Activated CD4-positive, alpha-beta memory T cell treated with anti-CD3 and anti-CD28 coated beads for 36 hours (primary cell): ENCODE measurements at regions of chr11 and their contacts with region 1.

Region 1: DNA sequence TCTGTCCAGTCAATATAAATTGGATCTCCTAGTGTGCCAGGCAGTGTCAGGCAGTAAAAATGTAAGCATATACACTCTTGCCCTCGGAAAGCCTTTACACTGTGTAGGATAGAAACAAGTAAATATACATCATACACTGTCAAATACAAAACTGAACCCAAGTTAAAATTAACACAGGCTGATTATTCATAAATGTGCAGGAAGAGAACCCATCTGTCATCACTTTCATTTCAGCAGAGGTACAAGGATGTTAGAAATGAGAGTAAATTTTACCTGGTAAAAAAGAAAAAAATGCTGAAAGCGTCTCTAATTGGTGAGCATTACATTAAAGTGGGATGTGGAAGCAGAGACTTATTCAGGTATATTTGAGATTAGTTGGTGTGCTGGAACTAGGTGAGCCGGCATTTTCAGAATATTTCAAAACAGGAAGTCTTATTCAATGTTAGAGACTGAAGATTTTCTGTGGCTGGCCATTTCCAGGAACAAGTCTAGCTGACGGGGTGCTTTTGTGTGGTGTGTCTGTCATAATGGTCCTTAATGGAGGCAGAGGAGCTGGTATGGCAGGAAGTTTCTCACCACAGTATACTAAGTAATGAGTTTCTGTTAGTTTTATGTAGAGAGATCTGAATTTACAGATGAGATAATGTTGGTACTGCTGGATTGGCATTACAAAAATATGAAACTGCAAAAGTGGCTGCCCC is 192.6 kb downstream of the CASP12 start:
- DNase-seq: peak; percentile 87
- H3K4me3 Mint-ChIP-seq: peak overlapping the region; percentile 64
- H3K27ac Mint-ChIP-seq: peak overlapping the region; percentile 89
- H3K4me1 Mint-ChIP-seq: peaks cover 48% of the 10 kb centered on the region
- H3K27me3 Mint-ChIP-seq: no peaks in the 10 kb centered on the region

Region 2: DNA sequence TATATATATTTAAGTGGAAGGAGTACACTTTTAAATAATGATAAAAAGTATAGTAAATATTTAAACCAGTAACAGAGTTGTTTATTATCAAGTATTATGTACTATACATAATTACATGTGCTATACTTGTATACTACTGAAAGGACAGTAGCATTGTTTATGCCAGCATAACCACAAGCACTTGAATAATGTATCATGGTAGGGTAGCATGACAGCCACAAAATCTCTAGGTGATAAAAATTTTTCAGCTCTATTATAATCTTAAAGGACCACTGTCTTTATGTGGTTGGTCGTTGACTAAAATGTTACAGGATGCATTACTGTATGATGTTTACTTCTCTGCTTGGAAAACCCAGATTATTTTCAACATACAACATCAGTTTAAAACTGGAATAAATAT is 156.6 kb before region 1 on chr11:
- CTCF ChIA-PET with region 1: no interaction called
- POLR2A ChIA-PET with region 1: no interaction called
- intact Hi-C with region 1: no loop called
- DNase-seq: no peak
- H3K4me3 Mint-ChIP-seq: no peak overlapping the region
- H3K27ac Mint-ChIP-seq: no peak overlapping the region
- H3K4me1 Mint-ChIP-seq: peaks cover 11% of the 10 kb centered on the region
- H3K27me3 Mint-ChIP-seq: no peaks in the 10 kb centered on the region

Region 3: GRCh38 chr11:104564921-104565582 is 140.6 kb before region 1 on chr11:
- CTCF ChIA-PET with region 1: no interaction called
- POLR2A ChIA-PET with region 1: no interaction called
- intact Hi-C with region 1: no loop called
- DNase-seq: no peak
- H3K4me3 Mint-ChIP-seq: no peak overlapping the region
- H3K27ac Mint-ChIP-seq: no peak overlapping the region
- H3K4me1 Mint-ChIP-seq: no peaks in the 10 kb centered on the region
- H3K27me3 Mint-ChIP-seq: no peaks in the 10 kb centered on the region

Region 4: GRCh38 chr11:104609311-104610085 is 96.1 kb before region 1 on chr11:
- CTCF ChIA-PET with region 1: interaction called, 5 read pairs
- POLR2A ChIA-PET with region 1: no interaction called
- intact Hi-C with region 1: loop called (anchors 2 kb)
- DNase-seq: peak; percentile 33
- H3K4me3 Mint-ChIP-seq: no peak overlapping the region
- H3K27ac Mint-ChIP-seq: no peak overlapping the region
- H3K4me1 Mint-ChIP-seq: peaks cover 23% of the 10 kb centered on the region
- H3K27me3 Mint-ChIP-seq: no peaks in the 10 kb centered on the region

Region 5: GRCh38 chr11:104668797-104669463 is 36.7 kb before region 1 on chr11:
- CTCF ChIA-PET with region 1: no interaction called
- POLR2A ChIA-PET with region 1: no interaction called
- intact Hi-C with region 1: loop called (anchors 1 kb)
- DNase-seq: no peak
- H3K4me3 Mint-ChIP-seq: no peak overlapping the region
- H3K27ac Mint-ChIP-seq: no peak overlapping the region
- H3K4me1 Mint-ChIP-seq: peaks cover 9% of the 10 kb centered on the region
- H3K27me3 Mint-ChIP-seq: no peaks in the 10 kb centered on the region

Region 6: GRCh38 chr11:104876861-104877431 is 171.3 kb after region 1 on chr11:
- CTCF ChIA-PET with region 1: no interaction called
- POLR2A ChIA-PET with region 1: no interaction called
- intact Hi-C with region 1: loop called (anchors 1 kb)
- DNase-seq: no peak
- H3K4me3 Mint-ChIP-seq: peak overlapping the region; percentile 3
- H3K27ac Mint-ChIP-seq: peak overlapping the region; percentile 23
- H3K4me1 Mint-ChIP-seq: peaks cover 31% of the 10 kb centered on the region
- H3K27me3 Mint-ChIP-seq: no peaks in the 10 kb centered on the region

Region 7: DNA sequence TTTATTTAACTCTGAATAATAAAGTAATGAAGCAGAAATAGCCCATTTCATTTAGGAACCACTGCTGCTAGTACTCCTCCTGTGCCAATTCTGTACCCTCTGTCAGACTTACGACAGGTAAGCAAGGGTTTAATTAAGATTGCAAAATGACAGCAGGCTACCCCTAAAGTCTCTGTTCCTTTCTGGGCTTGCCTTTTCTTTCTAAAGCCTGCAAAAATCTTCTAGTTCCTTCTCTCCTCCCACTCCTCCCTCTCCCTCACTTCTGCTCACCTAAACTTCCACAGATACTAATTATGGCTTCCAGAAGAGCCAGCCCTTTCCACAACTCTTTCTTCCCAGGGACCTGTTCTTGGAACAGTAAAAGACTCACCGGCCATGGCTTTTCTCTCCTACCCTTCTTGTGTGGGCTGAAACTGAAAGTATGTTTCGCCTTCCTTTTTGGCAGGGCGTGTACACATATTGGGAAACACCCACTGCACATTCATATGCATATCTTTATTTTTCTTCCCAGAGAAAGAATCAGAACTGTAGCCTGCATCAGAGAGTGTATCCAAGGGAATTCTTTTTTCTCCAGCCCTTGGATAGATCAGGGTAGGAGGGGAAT is 339.4 kb after region 1 on chr11 and contains the start of gene CARD16:
- CTCF ChIA-PET with region 1: no interaction called
- POLR2A ChIA-PET with region 1: no interaction called
- intact Hi-C with region 1: loop called (anchors 1 kb)
- DNase-seq: peak; percentile 55
- H3K4me3 Mint-ChIP-seq: peak within 1 kb of the TSS; percentile 77
- H3K27ac Mint-ChIP-seq: peak within 1 kb of the TSS; percentile 71
- H3K4me1 Mint-ChIP-seq: peaks cover 55% of the 10 kb centered on the region
- H3K27me3 Mint-ChIP-seq: no peaks in the 10 kb centered on the region
- total RNA-seq, gene CARD16: 8.6 to 10.5 TPM

Region 8: GRCh38 chr11:106021967-106022794 is 1316.5 kb after region 1 on chr11 and contains the start of gene MSANTD4:
- CTCF ChIA-PET with region 1: no interaction called
- POLR2A ChIA-PET with region 1: no interaction called
- intact Hi-C with region 1: loop called (anchors 5 kb)
- DNase-seq: peak; percentile 99
- H3K4me3 Mint-ChIP-seq: peak within 1 kb of the TSS; percentile 85
- H3K27ac Mint-ChIP-seq: peak within 1 kb of the TSS; percentile 87
- H3K4me1 Mint-ChIP-seq: peaks cover 40% of the 10 kb centered on the region
- H3K27me3 Mint-ChIP-seq: peaks cover 3% of the 10 kb centered on the region
- total RNA-seq, gene MSANTD4: 11.4 to 13.1 TPM